ENCODE measurements at regions of chr3 and their contacts with region 1.

Region 1: GRCh38 chr3:14413381-14414071 is 11.1 kb downstream of the SLC6A6 start:
- DNase-seq: no peak
- H3K4me3 ChIP-seq: no peak overlapping the region
- CTCF ChIP-seq: no peak

Region 2: GRCh38 chr3:14431892-14432834 is 18.6 kb after region 1 on chr3:
- CTCF ChIA-PET with region 1: interaction called, 12 read pairs
- POLR2A ChIA-PET with region 1: no interaction called
- DNase-seq: peak; percentile 29
- H3K4me3 ChIP-seq: no peak overlapping the region
- CTCF ChIP-seq: no peak